ENCODE measurements at regions of chr7 and their contacts with region 1.

Region 1: DNA sequence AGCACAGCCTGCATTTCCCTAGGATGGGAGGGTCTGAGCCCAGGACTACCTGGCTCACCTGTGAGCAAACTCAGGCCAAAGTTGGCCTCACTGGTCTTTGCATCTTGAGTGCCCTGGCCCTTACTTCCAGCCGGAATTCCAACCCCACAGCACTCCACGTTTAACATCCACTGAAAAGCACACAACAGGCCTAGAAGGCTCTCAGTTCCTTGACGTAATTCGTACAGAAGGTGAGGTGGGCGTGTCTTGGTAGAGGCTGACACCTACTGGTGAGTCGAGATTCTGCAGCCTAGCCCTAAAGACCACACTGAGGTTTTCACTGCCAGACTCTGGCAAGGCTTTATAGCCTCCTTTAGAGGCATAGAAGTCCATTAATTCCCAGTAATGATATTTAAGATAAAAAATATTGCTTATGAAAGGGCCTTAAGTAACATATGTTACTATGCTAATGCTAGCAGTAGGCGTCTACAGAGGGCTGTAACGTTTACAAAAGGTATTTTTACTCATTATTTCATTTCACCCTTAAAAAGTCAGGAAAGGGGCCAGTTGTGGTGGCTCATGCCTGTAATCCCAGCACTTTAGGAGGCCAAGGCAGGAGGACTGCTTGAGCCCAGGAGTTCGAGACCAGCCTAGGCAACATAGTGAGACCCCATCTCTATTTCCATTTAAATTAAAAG is 95.8 kb downstream of the HIP1 start:
- DNase-seq: peak; percentile 83
- H3K4me3 Mint-ChIP-seq: no peak overlapping the region
- H3K27ac Mint-ChIP-seq: no peak overlapping the region
- H3K4me1 Mint-ChIP-seq: peaks cover 9% of the 10 kb centered on the region
- H3K27me3 Mint-ChIP-seq: peaks cover 2% of the 10 kb centered on the region

Region 2: GRCh38 chr7:75531359-75531821 is 111.6 kb before region 1 on chr7:
- CTCF ChIA-PET with region 1: no interaction called
- POLR2A ChIA-PET with region 1: no interaction called
- intact Hi-C with region 1: loop called (anchors 2 kb)
- DNase-seq: no peak
- H3K4me3 Mint-ChIP-seq: no peak overlapping the region
- H3K27ac Mint-ChIP-seq: no peak overlapping the region
- H3K4me1 Mint-ChIP-seq: peaks cover 18% of the 10 kb centered on the region
- H3K27me3 Mint-ChIP-seq: no peaks in the 10 kb centered on the region

Region 3: DNA sequence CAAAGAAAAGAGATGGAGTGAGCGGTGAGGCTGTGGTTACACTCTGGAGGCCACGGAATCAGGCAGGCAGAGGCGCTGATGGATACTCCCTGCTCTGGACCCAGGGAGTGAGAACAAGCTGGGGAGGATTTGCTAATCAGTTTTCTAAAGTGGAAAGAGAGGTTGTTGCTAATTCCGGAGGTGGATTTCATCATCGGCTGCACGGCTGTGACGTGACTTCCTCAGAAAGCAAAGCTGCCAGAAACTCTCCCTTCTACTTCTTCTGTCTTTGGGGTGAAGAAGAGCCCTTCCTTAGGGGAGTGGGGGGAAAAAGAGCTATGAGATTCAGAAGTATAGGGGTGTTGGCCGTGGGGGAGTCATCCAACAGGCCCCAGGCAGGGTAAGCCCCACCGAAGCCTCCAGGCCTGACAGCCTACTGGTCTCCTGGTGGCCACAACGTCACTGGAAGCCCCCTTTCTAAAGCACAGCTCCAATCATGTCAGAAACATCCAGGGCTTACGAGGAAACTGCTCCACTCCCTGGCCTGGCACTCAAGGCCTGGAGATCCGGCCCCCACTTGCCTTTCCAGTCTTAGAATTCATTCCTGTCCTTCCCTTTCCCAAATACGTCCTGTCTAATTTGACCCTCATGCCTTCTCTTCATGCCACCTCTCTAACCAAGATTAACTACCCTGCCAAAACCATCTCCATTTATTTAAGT is 18.7 kb before region 1 on chr7:
- CTCF ChIA-PET with region 1: no interaction called
- POLR2A ChIA-PET with region 1: no interaction called
- intact Hi-C with region 1: no loop called
- DNase-seq: no peak
- H3K4me3 Mint-ChIP-seq: no peak overlapping the region
- H3K27ac Mint-ChIP-seq: no peak overlapping the region
- H3K4me1 Mint-ChIP-seq: no peaks in the 10 kb centered on the region
- H3K27me3 Mint-ChIP-seq: no peaks in the 10 kb centered on the region

Region 4: DNA sequence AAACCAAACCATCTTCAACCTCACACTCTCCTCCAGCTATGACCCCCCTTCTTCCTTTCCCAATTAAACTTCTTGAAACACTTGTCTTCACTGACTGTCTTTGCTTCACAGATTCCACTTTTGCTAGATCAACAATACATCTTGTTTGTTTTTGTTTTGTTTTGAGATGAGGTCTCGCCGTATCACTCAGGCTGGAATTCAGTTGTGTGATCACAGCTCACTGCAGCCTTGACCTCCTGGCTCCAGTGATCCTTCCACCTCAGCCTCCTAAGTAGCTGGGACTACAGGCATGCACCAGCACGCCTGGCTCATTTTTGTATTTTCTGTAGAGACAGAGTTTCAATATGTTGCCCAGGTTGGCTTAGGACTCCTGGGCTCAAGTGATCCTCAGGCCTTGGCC is 36.1 kb after region 1 on chr7:
- CTCF ChIA-PET with region 1: no interaction called
- POLR2A ChIA-PET with region 1: no interaction called
- intact Hi-C with region 1: no loop called
- DNase-seq: no peak
- H3K4me3 Mint-ChIP-seq: no peak overlapping the region
- H3K27ac Mint-ChIP-seq: no peak overlapping the region
- H3K4me1 Mint-ChIP-seq: no peaks in the 10 kb centered on the region
- H3K27me3 Mint-ChIP-seq: no peaks in the 10 kb centered on the region

Region 5: GRCh38 chr7:75762314-75762917 is 119.5 kb after region 1 on chr7:
- CTCF ChIA-PET with region 1: no interaction called
- POLR2A ChIA-PET with region 1: no interaction called
- intact Hi-C with region 1: loop called (anchors 5 kb)
- DNase-seq: no peak
- H3K4me3 Mint-ChIP-seq: no peak overlapping the region
- H3K27ac Mint-ChIP-seq: no peak overlapping the region
- H3K4me1 Mint-ChIP-seq: peaks cover 2% of the 10 kb centered on the region
- H3K27me3 Mint-ChIP-seq: no peaks in the 10 kb centered on the region